ENCODE measurements at regions of chr1 and their contacts with region 1.

Region 1: DNA sequence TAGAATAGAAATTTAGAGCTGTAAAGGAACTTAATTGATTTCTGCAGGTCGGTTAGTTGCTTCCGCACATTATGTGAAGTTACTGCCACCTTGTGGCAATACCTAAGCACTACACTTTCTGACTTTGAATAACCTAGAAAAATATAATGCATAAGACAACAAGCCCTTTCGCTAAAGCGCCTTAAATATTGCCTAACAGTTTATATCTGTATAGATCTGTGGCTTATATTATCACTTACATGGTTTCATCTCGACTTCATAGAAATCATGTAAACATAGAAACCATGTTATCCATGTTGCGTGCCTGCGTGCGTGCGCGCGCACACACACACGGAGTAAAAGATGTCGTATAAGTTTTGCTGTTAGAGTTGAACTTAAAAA is 10.9 kb upstream of the IFI16 start:
- DNase-seq: peak; percentile 79
- H3K4me3 ChIP-seq: no peak overlapping the region
- H3K27ac ChIP-seq: no peak overlapping the region
- H3K4me1 ChIP-seq: peaks cover 23% of the 10 kb centered on the region
- CTCF ChIP-seq: peak; percentile 98

Region 2: GRCh38 chr1:158248118-158248517 is 750.7 kb before region 1 on chr1:
- CTCF ChIA-PET with region 1: no interaction called
- POLR2A ChIA-PET with region 1: no interaction called
- intact Hi-C with region 1: loop called (anchors 2 kb)
- DNase-seq: peak; percentile 81
- H3K4me3 ChIP-seq: peak overlapping the region; percentile 16
- H3K27ac ChIP-seq: no peak overlapping the region
- H3K4me1 ChIP-seq: peaks cover 25% of the 10 kb centered on the region
- CTCF ChIP-seq: no peak

Region 3: DNA sequence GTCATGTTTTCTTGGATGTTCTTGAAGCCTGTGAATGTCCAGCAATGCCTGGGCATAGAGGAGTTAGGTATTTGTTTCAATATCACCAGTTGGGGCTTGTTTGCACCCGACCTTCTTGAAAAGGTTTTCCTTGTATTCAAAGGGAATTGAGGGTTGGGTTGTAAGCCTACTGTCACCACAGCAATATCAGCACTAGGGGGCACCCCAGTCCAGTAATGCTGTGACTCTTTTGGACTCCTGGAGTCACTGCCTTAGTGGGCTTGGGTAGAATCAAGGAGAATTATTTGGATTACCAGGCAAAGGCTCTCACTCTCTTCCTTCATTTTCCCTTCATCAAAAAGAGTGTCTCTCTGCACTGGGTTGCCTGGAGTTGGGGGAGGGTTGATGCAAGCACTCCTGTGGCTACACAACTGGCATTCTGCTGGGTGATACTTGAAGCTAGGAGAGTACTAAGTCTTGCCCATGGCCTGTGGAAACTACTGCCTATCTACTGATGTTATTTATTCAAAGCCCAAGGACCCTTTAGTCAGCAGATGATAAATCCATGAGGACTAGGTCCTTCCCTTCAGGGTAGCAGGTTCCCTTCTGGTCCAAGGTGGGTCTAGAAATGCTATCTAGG is 492.3 kb before region 1 on chr1:
- CTCF ChIA-PET with region 1: no interaction called
- POLR2A ChIA-PET with region 1: no interaction called
- intact Hi-C with region 1: loop called (anchors 1 kb)
- DNase-seq: peak; percentile 56
- H3K4me3 ChIP-seq: no peak overlapping the region
- H3K27ac ChIP-seq: no peak overlapping the region
- H3K4me1 ChIP-seq: no peaks in the 10 kb centered on the region
- CTCF ChIP-seq: peak; percentile 84

Region 4: DNA sequence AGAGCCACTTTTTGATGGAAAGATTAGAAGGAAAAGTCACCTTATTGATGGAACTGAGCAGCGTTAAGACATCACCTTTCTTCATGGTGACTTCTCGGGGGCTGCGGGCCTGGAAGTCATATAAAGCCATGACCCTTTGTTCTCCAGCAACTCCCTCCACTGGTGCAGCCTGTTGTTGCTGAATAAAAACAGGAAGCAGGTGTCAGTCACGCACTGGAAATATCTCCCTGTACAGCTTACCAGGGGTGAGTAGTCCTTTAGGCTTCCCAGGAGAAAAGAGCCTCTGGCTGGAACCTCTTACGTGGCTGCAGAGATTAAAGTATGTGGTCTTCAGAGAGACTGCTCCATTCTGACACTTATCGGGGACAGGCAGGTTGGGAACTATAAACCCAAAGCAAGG is 344.2 kb before region 1 on chr1:
- CTCF ChIA-PET with region 1: no interaction called
- POLR2A ChIA-PET with region 1: no interaction called
- intact Hi-C with region 1: loop called (anchors 5 kb)
- DNase-seq: peak; percentile 76
- H3K4me3 ChIP-seq: peak overlapping the region; percentile 25
- H3K27ac ChIP-seq: no peak overlapping the region
- H3K4me1 ChIP-seq: peaks cover 28% of the 10 kb centered on the region
- CTCF ChIP-seq: 0 out of 2 replicates have a peak, but pooled peaks have one; percentile 39

Region 5: DNA sequence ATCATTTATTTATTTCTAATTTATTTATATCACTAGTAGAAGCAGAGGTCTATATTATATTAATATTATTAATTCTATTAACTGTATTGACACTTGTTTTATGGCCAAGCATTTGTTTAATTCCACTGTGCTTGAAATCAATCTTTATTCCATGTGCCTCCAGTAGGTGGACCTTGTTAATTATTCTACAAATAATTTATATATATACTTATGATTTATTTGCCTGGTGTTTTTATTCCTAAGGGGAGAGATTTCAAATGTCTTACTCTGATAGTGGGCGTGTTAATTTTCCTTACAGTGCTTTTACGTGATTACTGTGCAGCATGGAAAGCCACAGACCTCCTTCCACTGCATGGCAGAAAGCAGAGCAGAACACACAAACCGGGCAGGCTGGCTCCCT is 200.2 kb before region 1 on chr1:
- CTCF ChIA-PET with region 1: no interaction called
- POLR2A ChIA-PET with region 1: no interaction called
- intact Hi-C with region 1: loop called (anchors 2 kb)
- DNase-seq: no peak
- H3K4me3 ChIP-seq: no peak overlapping the region
- H3K27ac ChIP-seq: no peak overlapping the region
- H3K4me1 ChIP-seq: no peaks in the 10 kb centered on the region
- CTCF ChIP-seq: peak; percentile 51; the same call in 1 of the 2 replicates

Region 6: DNA sequence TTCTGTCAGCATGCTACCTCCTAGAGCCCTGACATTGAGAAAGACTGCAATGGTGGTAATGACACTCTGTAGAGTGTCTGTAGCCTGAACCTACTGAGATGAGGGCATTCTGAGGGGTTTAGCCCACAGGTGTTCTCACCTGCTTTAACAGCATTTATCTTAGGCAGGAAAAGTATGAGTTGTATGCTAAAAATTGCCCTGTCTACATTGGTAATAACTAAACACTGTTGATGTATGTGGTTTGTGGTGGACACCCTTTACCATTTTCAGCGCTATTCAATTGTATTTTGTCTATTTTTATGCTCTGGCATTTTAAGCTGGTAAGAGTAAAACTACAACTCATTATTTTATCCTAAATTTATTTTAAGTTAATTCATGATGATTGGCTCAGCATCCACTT is 57.5 kb before region 1 on chr1:
- CTCF ChIA-PET with region 1: no interaction called
- POLR2A ChIA-PET with region 1: no interaction called
- intact Hi-C with region 1: no loop called
- DNase-seq: no peak
- H3K4me3 ChIP-seq: no peak overlapping the region
- H3K27ac ChIP-seq: no peak overlapping the region
- H3K4me1 ChIP-seq: no peaks in the 10 kb centered on the region
- CTCF ChIP-seq: no peak

Region 7: DNA sequence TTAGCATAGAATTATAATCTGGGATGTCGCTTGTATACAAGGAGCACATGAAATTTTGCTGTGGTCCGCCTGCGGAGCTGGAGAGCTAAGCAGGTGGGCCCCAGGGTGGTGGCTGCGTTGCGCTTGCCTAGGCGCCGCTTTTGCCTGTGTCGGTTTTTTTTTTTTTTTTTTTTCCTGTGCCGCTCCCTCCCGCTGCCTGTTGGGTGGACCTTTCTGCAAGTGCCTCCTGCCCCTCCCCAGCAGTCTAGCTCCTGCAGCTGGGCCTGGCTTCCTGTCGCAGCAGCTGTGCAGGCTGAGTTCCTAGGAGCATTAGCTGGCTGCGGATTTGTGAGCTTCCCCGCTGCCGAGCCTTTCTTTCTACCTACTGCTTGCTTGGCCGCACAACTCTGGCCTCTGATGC is 46.8 kb before region 1 on chr1:
- CTCF ChIA-PET with region 1: no interaction called
- POLR2A ChIA-PET with region 1: interaction called, 4 read pairs
- intact Hi-C with region 1: loop called (anchors 1 kb)
- DNase-seq: peak; percentile 97
- H3K4me3 ChIP-seq: peak overlapping the region; percentile 61
- H3K27ac ChIP-seq: peak overlapping the region; percentile 99
- H3K4me1 ChIP-seq: peaks cover 31% of the 10 kb centered on the region
- CTCF ChIP-seq: peak; percentile 52; the same call in 1 of the 2 replicates

Region 8: DNA sequence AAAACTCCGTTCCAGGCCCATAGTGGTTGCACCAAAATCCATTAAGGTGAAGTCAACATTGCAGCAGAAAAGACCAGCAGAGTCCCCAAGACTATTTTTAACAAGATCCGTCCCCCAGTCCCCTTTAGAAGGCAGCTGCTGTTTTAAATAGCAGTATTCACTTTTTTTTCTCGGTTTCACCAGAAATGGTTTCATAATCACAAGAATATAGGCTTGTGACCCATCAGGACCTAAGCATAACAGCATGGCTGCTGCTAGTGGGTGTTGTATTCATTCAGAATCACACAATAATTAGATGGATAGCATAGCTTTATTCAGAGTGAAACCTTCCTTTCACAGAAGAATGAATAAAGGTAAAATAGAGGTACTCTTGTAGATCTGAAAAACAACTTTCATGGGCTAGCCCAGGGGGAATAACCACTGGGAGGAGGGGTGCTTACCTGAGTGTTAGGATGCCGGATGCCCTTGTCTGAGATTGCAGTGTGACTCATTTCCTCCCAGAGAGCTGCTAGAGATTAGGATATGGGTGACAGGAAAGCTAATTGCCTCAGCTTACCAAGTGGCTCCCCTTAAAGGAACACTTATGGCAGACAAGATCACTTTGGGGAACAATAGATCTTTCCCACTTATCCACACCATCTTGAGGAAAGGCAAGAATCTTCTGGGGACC is 240.9 kb after region 1 on chr1:
- CTCF ChIA-PET with region 1: no interaction called
- POLR2A ChIA-PET with region 1: no interaction called
- intact Hi-C with region 1: no loop called
- DNase-seq: no peak
- H3K4me3 ChIP-seq: no peak overlapping the region
- H3K27ac ChIP-seq: no peak overlapping the region
- H3K4me1 ChIP-seq: no peaks in the 10 kb centered on the region
- CTCF ChIP-seq: no peak

Measured in OCI-LY7 (cell line).